IMR-90 (cell line): ENCODE measurements at regions of chr4 and their contacts with region 1.

Region 1: GRCh38 chr4:139501927-139502899 is 48.3 kb downstream of the RAB33B start:
- DNase-seq: no peak
- ATAC-seq: peak; percentile 38
- H3K4me3 ChIP-seq: no peak overlapping the region
- H3K27ac ChIP-seq: no peak overlapping the region
- H3K4me1 ChIP-seq: peaks cover 1% of the 10 kb centered on the region; the same call in 1 of the 2 replicates
- H3K27me3 ChIP-seq: no peaks in the 10 kb centered on the region
- CTCF ChIP-seq: no peak
- POLR2A ChIP-seq: no peak
- RAD21 ChIP-seq: no peak

Region 2: GRCh38 chr4:139488442-139488841 is 13.8 kb before region 1 on chr4:
- CTCF ChIA-PET with region 1: interaction called, 10 read pairs
- POLR2A ChIA-PET with region 1: no interaction called
- dilution Hi-C with region 1: no loop called
- in situ Hi-C with region 1: no loop called
- intact Hi-C with region 1: no loop called
- DNase-seq: no peak
- ATAC-seq: no peak
- H3K4me3 ChIP-seq: no peak overlapping the region
- H3K27ac ChIP-seq: no peak overlapping the region
- H3K4me1 ChIP-seq: no peaks in the 10 kb centered on the region
- H3K27me3 ChIP-seq: no peaks in the 10 kb centered on the region
- CTCF ChIP-seq: no peak
- POLR2A ChIP-seq: no peak
- RAD21 ChIP-seq: no peak

Region 3: DNA sequence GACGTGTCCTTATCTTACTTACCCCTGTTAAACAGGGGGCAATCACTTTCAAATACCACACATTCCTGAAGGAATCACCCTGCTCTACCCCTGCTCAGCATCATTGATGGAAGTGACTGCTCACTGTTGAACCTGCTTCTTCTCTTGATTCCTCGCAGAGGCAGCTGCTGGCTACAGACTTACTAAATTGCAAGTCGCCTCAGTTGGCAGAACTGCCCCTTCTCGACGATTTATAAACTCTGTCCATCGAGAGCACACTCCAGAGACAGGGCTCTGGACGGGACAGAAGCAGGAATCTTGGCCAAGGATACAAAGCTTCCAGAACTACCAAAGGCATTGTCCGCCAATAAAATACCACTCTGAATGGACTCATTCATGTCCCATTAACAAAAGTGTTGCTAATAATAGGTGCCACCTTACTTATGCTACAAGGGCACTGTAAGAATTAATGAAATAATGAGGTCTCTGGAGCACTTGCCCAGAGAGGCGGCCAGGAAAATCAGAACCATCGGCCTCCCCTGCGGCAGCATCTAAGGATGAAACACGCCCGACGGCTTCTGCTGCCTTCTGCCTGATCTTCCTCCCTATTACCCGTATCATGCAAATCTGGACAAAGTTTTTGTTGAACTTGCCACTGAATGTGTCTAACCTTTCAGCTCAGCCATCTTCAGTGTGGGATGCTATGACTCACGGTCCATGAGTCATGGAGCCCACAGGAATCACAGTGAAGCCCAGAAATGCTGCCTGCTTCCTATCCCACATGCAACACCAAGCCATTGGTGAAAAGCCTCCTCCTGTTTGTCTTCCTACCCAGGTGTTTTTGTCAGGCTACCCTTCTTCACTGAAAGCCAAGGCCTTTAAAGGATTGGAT is 486.9 kb after region 1 on chr4:
- CTCF ChIA-PET with region 1: no interaction called
- POLR2A ChIA-PET with region 1: no interaction called
- dilution Hi-C with region 1: no loop called
- in situ Hi-C with region 1: no loop called
- intact Hi-C with region 1: no loop called
- DNase-seq: peak; percentile 97
- ATAC-seq: peak; percentile 99
- H3K4me3 ChIP-seq: no peak overlapping the region
- H3K27ac ChIP-seq: no peak overlapping the region
- H3K4me1 ChIP-seq: no peaks in the 10 kb centered on the region
- H3K27me3 ChIP-seq: no peaks in the 10 kb centered on the region
- CTCF ChIP-seq: no peak
- POLR2A ChIP-seq: no peak
- RAD21 ChIP-seq: peak; percentile 19; the same call in 1 of the 2 replicates